Activated naive CD4-positive, alpha-beta T cell treated with anti-CD3 and anti-CD28 coated beads, Interleukin-2, amount 10 ng/mL, durations not matched to agents 7 days and 5 days (primary cell): ENCODE measurements at regions of chr4 and their contacts with region 1.

Region 1: GRCh38 chr4:88523325-88524129 is at the start of gene PYURF:
- DNase-seq: peak; percentile 84
- H3K4me3 Mint-ChIP-seq: peak within 1 kb of the TSS; percentile 95
- H3K27ac Mint-ChIP-seq: peak within 1 kb of the TSS; percentile 81
- H3K4me1 Mint-ChIP-seq: peaks cover 49% of the 10 kb centered on the region
- H3K27me3 Mint-ChIP-seq: no peaks in the 10 kb centered on the region

Region 2: GRCh38 chr4:88659055-88659889 is 135.7 kb after region 1 on chr4:
- CTCF ChIA-PET with region 1: interaction called, 25 read pairs
- DNase-seq: peak; percentile 54
- H3K4me3 Mint-ChIP-seq: no peak overlapping the region
- H3K27ac Mint-ChIP-seq: no peak overlapping the region
- H3K4me1 Mint-ChIP-seq: peaks cover 12% of the 10 kb centered on the region
- H3K27me3 Mint-ChIP-seq: no peaks in the 10 kb centered on the region

Region 3: DNA sequence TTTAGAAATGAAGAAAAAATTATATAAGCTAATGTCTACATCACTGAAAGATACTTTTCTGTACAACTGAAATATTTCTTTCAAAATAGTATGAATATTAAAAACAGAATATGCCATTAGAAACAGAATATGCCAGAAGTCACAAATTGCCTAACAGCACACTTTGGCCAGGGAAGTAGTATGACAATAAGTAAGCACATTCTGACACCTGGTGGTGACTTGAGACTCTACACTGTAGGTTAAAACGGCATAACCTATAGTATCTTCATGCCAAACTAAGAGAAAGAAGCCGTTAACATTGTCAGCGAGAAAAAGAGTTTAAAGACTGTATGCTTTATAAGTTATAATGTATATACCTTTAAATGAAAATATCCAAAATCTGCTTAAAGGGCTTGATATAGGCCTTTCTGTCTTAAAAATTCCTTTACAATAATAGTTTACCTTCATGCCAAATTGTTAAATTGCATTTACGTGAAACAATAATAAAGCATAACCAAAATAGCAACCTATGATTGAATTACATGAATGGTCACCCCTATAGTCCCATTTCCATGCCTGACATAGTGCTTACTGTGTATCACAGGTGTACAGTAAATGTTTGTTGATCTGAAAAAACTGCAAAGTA is 500.6 kb after region 1 on chr4:
- CTCF ChIA-PET with region 1: interaction called, 37 read pairs
- DNase-seq: peak; percentile 68
- H3K4me3 Mint-ChIP-seq: no peak overlapping the region
- H3K27ac Mint-ChIP-seq: no peak overlapping the region
- H3K4me1 Mint-ChIP-seq: peaks cover 24% of the 10 kb centered on the region
- H3K27me3 Mint-ChIP-seq: no peaks in the 10 kb centered on the region